Activated CD4-positive, alpha-beta T cell treated with anti-CD3 and anti-CD28 coated beads, Interleukin-2, amount 10 ng/mL, durations not matched to agents 7 days and 5 days (primary cell): ENCODE measurements at regions of chr12 and their contacts with region 1.

Region 1: GRCh38 chr12:53065975-53066931 is 12.9 kb downstream of the SPRYD3 start:
- DNase-seq: peak; percentile 71
- H3K4me3 Mint-ChIP-seq: no peak overlapping the region
- H3K27ac Mint-ChIP-seq: no peak overlapping the region
- H3K4me1 Mint-ChIP-seq: peaks cover 5% of the 10 kb centered on the region
- H3K27me3 Mint-ChIP-seq: no peaks in the 10 kb centered on the region

Region 2: DNA sequence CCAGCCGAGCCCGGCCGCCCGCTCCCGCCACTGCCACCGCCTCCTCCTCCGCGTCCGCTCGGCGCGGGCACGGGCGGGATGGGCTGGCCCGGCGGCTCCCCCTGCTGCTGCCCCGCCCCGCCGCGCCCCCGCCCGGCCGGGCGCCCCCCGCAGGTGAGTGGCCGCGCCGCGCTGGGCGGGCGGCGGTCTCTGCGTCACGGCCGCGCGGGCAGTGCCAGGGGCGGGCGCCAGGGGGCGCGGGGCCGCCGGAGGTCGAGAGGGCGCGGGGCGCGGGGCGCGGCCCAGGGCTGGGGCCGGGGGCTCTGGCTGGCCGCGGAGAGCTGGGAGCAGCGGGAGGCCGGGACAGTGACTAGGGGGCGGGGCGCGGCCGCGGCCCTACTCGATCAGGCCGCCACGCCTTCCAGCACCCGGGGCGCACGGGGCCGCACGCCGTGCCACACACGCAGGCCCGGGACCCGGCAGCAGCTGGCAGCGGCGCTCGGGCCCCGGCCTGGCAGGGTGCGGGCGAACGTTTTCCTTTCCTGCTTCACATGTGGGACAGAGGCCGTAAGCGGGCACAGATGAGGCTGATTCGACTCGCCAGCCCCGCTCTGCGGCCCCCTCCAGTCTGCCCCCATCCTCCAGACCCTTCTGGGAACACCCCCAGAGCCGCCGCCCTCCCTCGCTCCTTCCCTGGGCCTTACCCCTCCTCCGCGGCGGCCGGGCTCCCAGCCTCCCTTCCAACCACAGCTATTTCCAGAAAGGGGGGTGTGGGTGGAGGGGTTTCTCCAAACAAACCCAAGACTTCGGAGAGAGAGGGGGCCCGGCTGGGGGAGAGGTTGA is 18.8 kb before region 1 on chr12:
- CTCF ChIA-PET with region 1: interaction called, 11 read pairs
- POLR2A ChIA-PET with region 1: no interaction called
- DNase-seq: peak; percentile 59
- H3K4me3 Mint-ChIP-seq: peak overlapping the region; percentile 32
- H3K27ac Mint-ChIP-seq: peak overlapping the region; percentile 13
- H3K4me1 Mint-ChIP-seq: peaks cover 30% of the 10 kb centered on the region
- H3K27me3 Mint-ChIP-seq: peaks cover 10% of the 10 kb centered on the region

Region 3: DNA sequence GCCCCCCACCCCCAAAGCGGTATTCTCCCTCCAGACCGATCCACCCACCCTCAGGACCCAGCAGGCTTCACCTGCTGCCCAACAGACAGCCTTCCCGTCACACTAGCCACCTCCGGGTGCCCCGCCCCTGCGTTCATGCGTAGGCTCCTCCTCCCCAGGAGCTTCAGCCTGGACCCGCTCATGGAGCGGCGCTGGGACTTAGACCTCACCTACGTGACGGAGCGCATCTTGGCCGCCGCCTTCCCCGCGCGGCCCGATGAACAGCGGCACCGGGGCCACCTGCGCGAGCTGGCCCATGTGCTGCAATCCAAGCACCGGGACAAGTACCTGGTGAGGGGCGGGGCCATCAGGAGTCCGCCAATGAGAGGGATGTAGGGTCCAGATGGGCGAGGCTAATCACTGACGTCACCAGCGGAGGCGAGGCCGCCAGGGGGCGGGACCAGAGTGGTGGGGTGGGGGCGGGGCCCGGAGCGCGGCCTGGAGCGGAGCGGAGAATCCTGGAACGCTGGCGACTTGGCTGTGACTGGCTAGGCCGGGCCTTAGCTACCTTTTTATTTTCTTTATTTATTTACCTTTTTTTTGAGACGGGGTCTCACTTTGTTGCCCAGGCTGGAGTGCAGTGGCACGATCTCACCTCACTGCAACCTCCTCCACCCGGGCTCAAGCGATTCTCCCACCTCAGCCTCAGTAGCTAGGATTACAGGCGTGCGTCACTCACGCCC is 12.0 kb before region 1 on chr12:
- CTCF ChIA-PET with region 1: interaction called, 33 read pairs
- POLR2A ChIA-PET with region 1: interaction called, 14 read pairs
- DNase-seq: peak; percentile 95
- H3K4me3 Mint-ChIP-seq: peak overlapping the region; percentile 88
- H3K27ac Mint-ChIP-seq: peak overlapping the region; percentile 91
- H3K4me1 Mint-ChIP-seq: peaks cover 17% of the 10 kb centered on the region
- H3K27me3 Mint-ChIP-seq: no peaks in the 10 kb centered on the region

Region 4: GRCh38 chr12:53079226-53080117 is 13.2 kb after region 1 on chr12 and contains the start of gene SPRYD3:
- CTCF ChIA-PET with region 1: interaction called, 39 read pairs
- POLR2A ChIA-PET with region 1: interaction called, 3 read pairs
- DNase-seq: peak; percentile 97
- H3K4me3 Mint-ChIP-seq: peak within 1 kb of the TSS; percentile 90
- H3K27ac Mint-ChIP-seq: peak within 1 kb of the TSS; percentile 95
- H3K4me1 Mint-ChIP-seq: peaks cover 37% of the 10 kb centered on the region
- H3K27me3 Mint-ChIP-seq: no peaks in the 10 kb centered on the region
- total RNA-seq, gene SPRYD3: 19.0 to 20.2 TPM

Region 5: GRCh38 chr12:53086361-53086760 is 20.1 kb after region 1 on chr12:
- CTCF ChIA-PET with region 1: interaction called, 39 read pairs
- POLR2A ChIA-PET with region 1: no interaction called
- DNase-seq: no peak
- H3K4me3 Mint-ChIP-seq: no peak overlapping the region
- H3K27ac Mint-ChIP-seq: no peak overlapping the region
- H3K4me1 Mint-ChIP-seq: peaks cover 5% of the 10 kb centered on the region
- H3K27me3 Mint-ChIP-seq: peaks cover 28% of the 10 kb centered on the region

Region 6: GRCh38 chr12:53093777-53094393 is 27.6 kb after region 1 on chr12:
- CTCF ChIA-PET with region 1: interaction called, 99 read pairs
- POLR2A ChIA-PET with region 1: no interaction called
- DNase-seq: no peak
- H3K4me3 Mint-ChIP-seq: no peak overlapping the region
- H3K27ac Mint-ChIP-seq: no peak overlapping the region
- H3K4me1 Mint-ChIP-seq: peaks cover 27% of the 10 kb centered on the region
- H3K27me3 Mint-ChIP-seq: peaks cover 39% of the 10 kb centered on the region

Region 7: DNA sequence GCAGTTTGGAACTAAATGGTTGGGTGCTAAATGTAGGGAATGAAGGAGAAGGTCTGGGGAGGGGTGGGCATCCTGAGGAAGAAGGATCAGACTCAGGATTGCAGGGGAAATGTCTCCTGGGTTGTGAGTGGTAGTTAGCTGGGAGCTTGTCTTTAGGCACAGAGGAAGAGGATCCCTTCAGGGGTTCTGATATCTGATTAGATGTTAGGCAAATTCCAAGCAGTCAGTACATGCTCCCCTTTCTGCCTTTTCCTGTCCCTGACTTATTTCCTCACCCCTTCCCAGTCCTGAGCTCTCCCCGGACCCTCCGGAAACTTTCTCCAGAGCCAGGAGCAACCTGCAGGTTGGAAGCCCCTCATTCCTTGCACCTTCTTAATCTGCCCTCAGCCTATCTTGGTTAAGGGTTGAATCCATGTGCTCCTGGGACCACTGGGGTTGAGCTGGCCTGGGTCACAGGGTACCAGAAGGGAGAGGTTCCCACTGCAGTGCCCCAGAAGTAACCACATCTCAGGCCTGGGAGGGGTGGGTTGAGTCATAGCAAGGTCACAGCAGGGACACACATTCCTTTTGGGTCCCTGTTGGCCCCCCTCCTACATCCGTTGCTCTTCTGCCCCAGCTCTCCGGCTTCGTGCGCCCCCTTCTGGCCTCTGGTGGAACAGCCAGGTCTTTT is 32.9 kb after region 1 on chr12:
- CTCF ChIA-PET with region 1: interaction called, 99 read pairs
- POLR2A ChIA-PET with region 1: no interaction called
- DNase-seq: peak; percentile 91
- H3K4me3 Mint-ChIP-seq: peak overlapping the region; percentile 18
- H3K27ac Mint-ChIP-seq: peak overlapping the region; percentile 60
- H3K4me1 Mint-ChIP-seq: peaks cover 63% of the 10 kb centered on the region
- H3K27me3 Mint-ChIP-seq: peaks cover 22% of the 10 kb centered on the region